ENCODE measurements at regions of chr1 and their contacts with region 1.

Region 1: GRCh38 chr1:154772606-154773506 is 97.2 kb downstream of the KCNN3 start:
- DNase-seq: no peak
- ATAC-seq: no peak
- H3K4me3 ChIP-seq: no peak overlapping the region
- H3K27ac ChIP-seq: no peak overlapping the region
- H3K4me1 ChIP-seq: no peaks in the 10 kb centered on the region
- H3K27me3 ChIP-seq: no peaks in the 10 kb centered on the region

Region 2: DNA sequence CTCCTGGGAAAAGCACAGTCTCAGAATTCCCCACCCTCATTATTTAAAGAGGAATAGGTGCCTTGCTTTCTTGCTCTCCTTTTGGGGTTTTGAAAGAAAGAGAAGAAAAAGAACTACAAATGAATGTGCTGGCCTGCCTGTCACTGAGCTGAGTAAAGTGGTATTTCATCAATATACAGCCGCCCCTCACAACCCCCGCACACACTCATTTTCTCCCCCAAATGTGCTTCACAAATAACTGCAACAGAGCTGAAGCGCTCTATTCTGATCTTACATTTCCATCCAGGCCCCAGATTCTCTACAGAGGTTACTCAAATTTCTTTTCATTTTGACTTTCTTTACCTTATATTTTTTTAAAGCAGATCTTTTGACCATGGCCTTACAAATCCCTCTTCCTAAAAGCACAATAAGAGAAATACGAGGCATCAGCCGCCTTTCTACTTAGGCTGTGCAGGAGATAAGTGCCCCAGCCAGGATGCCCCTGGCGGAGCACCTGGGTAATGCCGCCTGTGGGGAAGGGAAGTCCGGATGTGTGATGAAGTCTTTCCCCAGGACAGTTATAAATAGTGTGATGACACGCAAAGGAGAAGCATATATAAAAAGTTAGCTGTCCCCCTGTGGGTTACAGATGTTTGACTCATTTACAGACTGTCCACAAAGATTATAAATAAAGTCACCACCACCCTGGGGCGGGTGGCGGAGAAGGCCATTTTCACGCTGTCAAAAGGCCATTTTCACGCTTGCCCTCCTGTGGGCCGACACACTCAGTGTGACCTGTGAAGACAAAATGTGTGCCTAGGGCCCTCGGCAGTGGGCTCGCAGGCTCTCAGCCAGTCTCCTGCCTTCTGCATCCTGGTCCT is 90.7 kb after region 1 on chr1:
- intact Hi-C with region 1: loop called in 1 of 4 experiments (anchors 10 kb)
- DNase-seq: no peak
- ATAC-seq: peak in 1 of 2 donors; percentile 31
- H3K4me3 ChIP-seq: no peak overlapping the region
- H3K27ac ChIP-seq: no peak overlapping the region
- H3K4me1 ChIP-seq: no peaks in the 10 kb centered on the region
- H3K27me3 ChIP-seq: no peaks in the 10 kb centered on the region